ENCODE measurements at regions of chr10 and their contacts with region 1.

Region 1: GRCh38 chr10:114780610-114781184 is 40.9 kb upstream of the FHIP2A start:
- DNase-seq: no peak
- ATAC-seq: peak; percentile 9 to 38; a peak in 3 of 6 replicates
- H3K4me3 ChIP-seq: no peak overlapping the region
- H3K27ac ChIP-seq: peak overlapping the region; percentile 68 to 79
- H3K4me1 ChIP-seq: peaks cover 37% of the 10 kb centered on the region
- CTCF ChIP-seq: no peak
- EP300 ChIP-seq: no peak
- POLR2A ChIP-seq: no peak
- RAD21 ChIP-seq: no peak

Region 2: GRCh38 chr10:114559636-114560035 is 221.1 kb before region 1 on chr10:
- CTCF ChIA-PET with region 1: interaction called, 89 read pairs
- POLR2A ChIA-PET with region 1: no interaction called
- DNase-seq: no peak
- ATAC-seq: no peak
- H3K4me3 ChIP-seq: no peak overlapping the region
- H3K27ac ChIP-seq: no peak overlapping the region
- H3K4me1 ChIP-seq: no peaks in the 10 kb centered on the region
- CTCF ChIP-seq: no peak
- EP300 ChIP-seq: no peak
- POLR2A ChIP-seq: no peak
- RAD21 ChIP-seq: no peak

Region 3: DNA sequence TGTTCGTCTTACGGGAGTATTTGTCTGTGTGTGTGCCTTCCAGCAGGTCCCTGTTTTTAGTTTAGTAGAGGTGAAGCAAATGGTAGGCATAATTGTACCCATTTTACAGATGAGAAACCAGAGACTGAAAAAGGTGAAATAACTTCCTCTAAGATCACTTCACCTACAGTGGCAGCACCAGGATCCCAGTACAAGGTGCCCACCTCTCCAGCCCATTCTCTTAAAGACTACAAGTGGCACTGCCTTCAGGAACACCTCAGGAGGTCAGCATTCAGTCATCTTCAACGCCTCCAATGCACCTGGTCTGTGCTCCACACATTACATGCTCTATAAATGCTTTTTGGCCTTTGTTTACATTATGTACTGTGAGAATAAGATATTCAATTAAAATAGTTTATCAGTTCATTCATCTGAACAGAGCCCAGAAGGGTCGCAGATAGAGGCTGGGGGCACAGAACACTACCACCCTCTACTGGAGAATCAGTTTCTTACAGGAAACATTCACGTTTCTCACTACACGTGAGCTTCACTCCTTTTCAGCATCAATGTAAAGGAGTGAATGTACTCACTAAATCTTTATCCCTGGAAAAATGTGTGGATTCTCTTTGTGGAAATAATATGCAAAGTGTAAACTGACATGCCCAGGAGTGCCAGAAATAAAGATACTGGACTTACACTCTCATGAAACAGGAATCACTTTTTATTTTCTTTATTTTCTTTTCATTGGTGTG is 77.2 kb before region 1 on chr10:
- CTCF ChIA-PET with region 1: interaction called, 33 read pairs
- POLR2A ChIA-PET with region 1: no interaction called
- DNase-seq: peak; percentile 38 to 45
- ATAC-seq: peak; percentile 68 to 83; a peak in 4 of 6 replicates
- H3K4me3 ChIP-seq: no peak overlapping the region
- H3K27ac ChIP-seq: no peak overlapping the region
- H3K4me1 ChIP-seq: peaks cover 7% of the 10 kb centered on the region
- CTCF ChIP-seq: peak; percentile 86
- EP300 ChIP-seq: no peak
- POLR2A ChIP-seq: no peak
- RAD21 ChIP-seq: peak; percentile 93 to 95

Region 4: GRCh38 chr10:114714281-114714741 is 66.4 kb before region 1 on chr10:
- CTCF ChIA-PET with region 1: interaction called, 15 read pairs
- POLR2A ChIA-PET with region 1: no interaction called
- DNase-seq: peak; percentile 70 to 81
- ATAC-seq: peak; percentile 92 to 95
- H3K4me3 ChIP-seq: peak overlapping the region; percentile 22; the same call in 1 of the 3 replicates
- H3K27ac ChIP-seq: peak overlapping the region; percentile 60 to 79
- H3K4me1 ChIP-seq: peaks cover 66% of the 10 kb centered on the region
- CTCF ChIP-seq: no peak
- EP300 ChIP-seq: no peak
- POLR2A ChIP-seq: no peak
- RAD21 ChIP-seq: peak in 1 of 2 experiments; percentile 16; a peak in 1 of 5 replicates

Measured in A549 (cell line).